ENCODE measurements at regions of chr21 and their contacts with region 1.

Region 1: GRCh38 chr21:39720126-39720778 is 24.7 kb upstream of the IGSF5 start:
- DNase-seq: no peak
- CTCF ChIP-seq: no peak

Region 2: DNA sequence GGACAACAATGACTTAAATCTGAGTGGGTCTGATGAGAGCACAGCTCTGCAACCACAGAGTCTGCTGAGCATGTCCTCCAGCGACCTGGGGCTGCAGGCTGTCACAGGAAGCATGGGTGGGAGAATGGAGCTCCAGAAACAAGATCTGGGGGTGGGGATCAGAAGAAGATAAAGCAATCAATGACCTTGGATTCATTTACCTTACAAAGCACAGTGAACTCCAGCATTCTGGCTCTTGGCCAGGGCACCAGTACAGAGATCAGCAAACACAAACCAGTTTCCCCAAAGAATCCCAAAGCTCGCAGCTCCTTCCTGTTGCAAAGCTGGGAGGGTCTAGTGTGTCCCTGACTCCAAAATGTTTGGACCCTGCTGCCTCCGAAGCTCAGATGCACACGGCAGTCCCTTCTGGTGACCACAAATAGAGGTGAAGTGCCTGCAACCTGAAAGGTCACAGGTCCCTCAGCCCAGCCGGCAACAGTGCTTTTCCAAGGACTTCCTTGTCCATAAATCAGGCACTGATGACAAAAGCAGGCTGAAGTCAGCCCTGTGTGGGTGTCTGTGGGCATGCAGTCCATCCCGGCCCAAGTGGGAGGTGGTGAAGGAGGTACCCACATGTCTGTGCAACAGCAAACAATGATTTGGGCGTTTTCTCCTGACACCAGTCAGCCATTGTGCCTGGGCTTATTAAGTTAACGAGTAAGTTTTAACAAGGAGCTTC is 192.4 kb before region 1 on chr21:
- in situ Hi-C with region 1: loop called (anchors 10 kb)
- DNase-seq: no peak
- CTCF ChIP-seq: no peak

Measured in GM13976 (cell line).